Ascending aorta (tissue), 2 donors: ENCODE measurements at regions of chr6 and their contacts with region 1.

Region 1: GRCh38 chr6:157314705-157315321 is 8.5 kb downstream of the TMEM242 start:
- DNase-seq: no peak
- H3K4me3 ChIP-seq: no peak overlapping the region
- H3K27ac ChIP-seq: no peak overlapping the region
- H3K4me1 ChIP-seq: peaks cover 0 to 4% of the 10 kb centered on the region in 2 donors
- H3K27me3 ChIP-seq: no peaks in the 10 kb centered on the region
- CTCF ChIP-seq: peak; percentile 63 to 84 (median 83)

Region 2: GRCh38 chr6:156219973-156220372 is 1094.8 kb before region 1 on chr6:
- intact Hi-C with region 1: no loop called
- DNase-seq: no peak
- H3K4me3 ChIP-seq: no peak overlapping the region
- H3K27ac ChIP-seq: no peak overlapping the region
- H3K4me1 ChIP-seq: no peaks in the 10 kb centered on the region
- H3K27me3 ChIP-seq: no peaks in the 10 kb centered on the region
- CTCF ChIP-seq: no peak

Region 3: GRCh38 chr6:157461000-157461915 is 146.4 kb after region 1 on chr6:
- intact Hi-C with region 1: no loop called
- DNase-seq: no peak
- H3K4me3 ChIP-seq: no peak overlapping the region
- H3K27ac ChIP-seq: no peak overlapping the region
- H3K4me1 ChIP-seq: no peaks in the 10 kb centered on the region
- H3K27me3 ChIP-seq: no peaks in the 10 kb centered on the region
- CTCF ChIP-seq: no peak

Region 4: GRCh38 chr6:157597446-157598312 is 282.9 kb after region 1 on chr6:
- intact Hi-C with region 1: loop called (anchors 2 kb)
- DNase-seq: no peak
- H3K4me3 ChIP-seq: no peak overlapping the region
- H3K27ac ChIP-seq: no peak overlapping the region
- H3K4me1 ChIP-seq: no peaks in the 10 kb centered on the region
- H3K27me3 ChIP-seq: no peaks in the 10 kb centered on the region
- CTCF ChIP-seq: peak; percentile 23 to 64 (median 45)

Region 5: DNA sequence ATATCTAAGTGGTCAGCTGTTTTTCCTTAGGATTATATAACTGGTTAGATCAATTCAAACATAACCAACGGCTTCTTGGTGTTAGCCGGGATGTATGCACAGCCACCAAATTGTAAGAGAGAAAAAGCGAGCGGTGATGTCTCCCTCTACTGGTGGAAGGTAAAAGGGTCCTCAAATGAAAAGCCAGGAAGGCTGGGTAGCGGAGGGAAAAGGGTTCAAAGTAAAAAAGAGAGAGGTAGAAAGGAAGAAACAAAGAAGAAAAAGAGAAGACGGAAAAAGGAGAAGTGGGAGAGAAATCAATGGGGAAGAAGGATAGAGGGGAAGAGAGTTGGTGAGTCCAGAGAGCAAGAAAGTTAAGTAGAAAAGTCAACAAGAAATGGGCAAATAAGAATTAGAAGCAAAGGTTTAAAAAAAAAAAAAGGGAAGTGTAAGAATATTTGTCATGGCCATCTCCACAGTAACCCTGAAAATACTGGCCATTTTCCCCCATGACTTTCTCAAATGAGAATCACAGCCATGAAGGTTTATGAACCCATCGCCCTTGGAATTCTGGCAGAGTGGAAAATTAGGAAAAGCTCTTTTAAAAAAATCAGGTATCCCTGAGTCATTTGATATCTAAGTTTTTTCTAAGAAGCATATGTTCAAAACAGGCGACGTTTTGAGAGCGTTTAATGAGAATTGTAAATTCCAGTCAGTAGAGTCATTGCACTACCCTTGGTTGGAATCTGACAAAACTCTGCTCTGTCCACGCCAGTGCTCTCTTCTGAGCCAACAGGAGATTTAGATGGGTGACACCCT is 352.6 kb after region 1 on chr6:
- intact Hi-C with region 1: loop called (anchors 1 kb)
- DNase-seq: peak in 1 of 2 donors; percentile 78
- H3K4me3 ChIP-seq: no peak overlapping the region
- H3K27ac ChIP-seq: no peak overlapping the region
- H3K4me1 ChIP-seq: peaks cover 11 to 14% of the 10 kb centered on the region in 2 donors
- H3K27me3 ChIP-seq: no peaks in the 10 kb centered on the region
- CTCF ChIP-seq: peak; percentile 75 to 85 (median 82)